B cell (primary cell): ENCODE measurements at regions of chr5 and their contacts with region 1.

Region 1: GRCh38 chr5:127875235-127876021 is 172.2 kb downstream of the CCDC192 start:
- DNase-seq: peak; percentile 29
- ATAC-seq: no peak
- H3K4me3 ChIP-seq: no peak overlapping the region
- H3K4me3 Mint-ChIP-seq: no peak overlapping the region
- H3K27ac ChIP-seq: no peak overlapping the region
- H3K27ac Mint-ChIP-seq: no peak overlapping the region
- H3K4me1 ChIP-seq: peaks cover 0 to 2% of the 10 kb centered on the region in 2 donors
- H3K4me1 Mint-ChIP-seq: no peaks in the 10 kb centered on the region
- H3K27me3 ChIP-seq: peaks cover 0 to 3% (median 0%) of the 10 kb centered on the region in 4 experiments
- H3K27me3 Mint-ChIP-seq: peaks cover 6% of the 10 kb centered on the region
- CTCF ChIP-seq: no peak

Region 2: DNA sequence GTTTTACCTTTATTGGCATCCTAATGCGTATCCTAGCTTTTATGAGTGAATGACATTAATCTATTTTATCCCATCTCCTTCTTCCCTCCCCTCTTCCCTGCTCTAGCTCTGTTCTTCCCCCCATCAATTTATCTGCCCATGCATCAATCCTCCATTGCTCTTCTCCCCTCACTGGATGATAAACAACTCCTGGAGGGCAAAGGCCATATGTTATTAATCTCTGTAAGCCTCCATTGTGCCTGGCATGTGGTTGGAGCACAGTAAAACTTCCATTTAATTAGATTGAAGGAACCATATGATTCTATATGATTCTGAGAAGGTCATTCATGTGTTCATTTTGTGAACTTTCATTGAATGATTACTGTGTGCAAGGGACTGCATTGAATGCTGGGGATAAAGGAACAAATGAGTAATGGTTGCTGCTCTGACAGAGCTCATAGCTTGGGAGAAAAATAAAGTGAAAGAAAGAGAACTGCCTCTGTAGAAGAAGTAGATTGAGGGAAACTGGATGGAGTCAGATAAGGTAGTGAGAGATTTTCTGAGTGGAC is 499.8 kb before region 1 on chr5:
- CTCF ChIA-PET with region 1: no interaction called
- POLR2A ChIA-PET with region 1: no interaction called
- intact Hi-C with region 1: no loop called
- DNase-seq: no peak
- ATAC-seq: no peak
- H3K4me3 ChIP-seq: no peak overlapping the region
- H3K4me3 Mint-ChIP-seq: no peak overlapping the region
- H3K27ac ChIP-seq: no peak overlapping the region
- H3K27ac Mint-ChIP-seq: no peak overlapping the region
- H3K4me1 ChIP-seq: no peaks in the 10 kb centered on the region
- H3K4me1 Mint-ChIP-seq: no peaks in the 10 kb centered on the region
- H3K27me3 ChIP-seq: peaks cover 0 to 2% (median 0%) of the 10 kb centered on the region in 4 experiments
- H3K27me3 Mint-ChIP-seq: peaks cover 17% of the 10 kb centered on the region
- CTCF ChIP-seq: no peak

Region 3: DNA sequence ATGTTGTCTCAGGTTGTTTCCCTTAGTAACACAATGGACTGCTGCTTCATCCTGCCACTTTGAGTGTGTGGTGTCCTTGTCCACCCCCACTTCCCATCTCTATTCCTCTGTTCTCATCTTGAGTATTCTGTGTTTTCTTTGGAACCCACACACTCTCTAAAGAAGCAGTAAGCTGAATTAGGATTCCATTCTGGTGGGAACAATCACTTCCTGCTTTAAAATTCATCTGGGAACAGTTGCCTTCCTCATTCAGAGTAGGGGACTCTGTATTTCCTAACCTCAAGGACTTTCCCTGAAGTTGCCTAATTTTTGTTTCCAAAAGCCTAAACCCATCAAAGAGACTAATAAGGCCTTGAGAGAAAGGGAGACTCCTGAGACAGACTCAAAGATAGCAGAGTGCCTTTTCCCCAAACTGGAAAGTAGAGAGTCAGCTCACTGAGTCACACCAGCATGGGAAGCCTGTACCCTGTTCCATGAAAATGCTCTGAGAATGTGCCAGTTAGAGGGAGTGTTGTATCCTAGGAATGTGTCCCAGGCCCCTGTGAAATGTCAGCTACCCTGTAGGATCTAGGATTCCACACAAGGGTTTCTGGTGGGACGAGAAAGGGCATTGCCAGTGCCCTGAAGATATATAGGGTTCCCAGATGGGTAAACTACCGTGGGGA is 108.6 kb before region 1 on chr5:
- CTCF ChIA-PET with region 1: no interaction called
- POLR2A ChIA-PET with region 1: no interaction called
- intact Hi-C with region 1: no loop called
- DNase-seq: no peak
- ATAC-seq: no peak
- H3K4me3 ChIP-seq: no peak overlapping the region
- H3K4me3 Mint-ChIP-seq: no peak overlapping the region
- H3K27ac ChIP-seq: no peak overlapping the region
- H3K27ac Mint-ChIP-seq: no peak overlapping the region
- H3K4me1 ChIP-seq: no peaks in the 10 kb centered on the region
- H3K4me1 Mint-ChIP-seq: no peaks in the 10 kb centered on the region
- H3K27me3 ChIP-seq: no peaks in the 10 kb centered on the region
- H3K27me3 Mint-ChIP-seq: peaks cover 5% of the 10 kb centered on the region
- CTCF ChIP-seq: no peak

Region 4: GRCh38 chr5:128146671-128147070 is 271.2 kb after region 1 on chr5:
- CTCF ChIA-PET with region 1: no interaction called
- POLR2A ChIA-PET with region 1: no interaction called
- intact Hi-C with region 1: no loop called
- DNase-seq: no peak
- ATAC-seq: no peak
- H3K4me3 ChIP-seq: no peak overlapping the region
- H3K4me3 Mint-ChIP-seq: no peak overlapping the region
- H3K27ac ChIP-seq: no peak overlapping the region
- H3K27ac Mint-ChIP-seq: no peak overlapping the region
- H3K4me1 ChIP-seq: no peaks in the 10 kb centered on the region
- H3K4me1 Mint-ChIP-seq: no peaks in the 10 kb centered on the region
- H3K27me3 ChIP-seq: no peaks in the 10 kb centered on the region
- H3K27me3 Mint-ChIP-seq: no peaks in the 10 kb centered on the region
- CTCF ChIP-seq: no peak

Region 5: GRCh38 chr5:128201065-128201926 is 325.9 kb after region 1 on chr5:
- CTCF ChIA-PET with region 1: interaction called, 22 read pairs
- POLR2A ChIA-PET with region 1: no interaction called
- intact Hi-C with region 1: loop called (anchors 1 kb)
- DNase-seq: peak; percentile 76
- ATAC-seq: peak; percentile 99
- H3K4me3 ChIP-seq: no peak overlapping the region
- H3K4me3 Mint-ChIP-seq: peak overlapping the region; percentile 27
- H3K27ac ChIP-seq: no peak overlapping the region
- H3K27ac Mint-ChIP-seq: no peak overlapping the region
- H3K4me1 ChIP-seq: peaks cover 7% of the 10 kb centered on the region in 2 donors
- H3K4me1 Mint-ChIP-seq: peaks cover 7% of the 10 kb centered on the region
- H3K27me3 ChIP-seq: peaks cover 0 to 2% (median 0%) of the 10 kb centered on the region in 4 experiments
- H3K27me3 Mint-ChIP-seq: peaks cover 3% of the 10 kb centered on the region
- CTCF ChIP-seq: peak; percentile 91